ENCODE measurements at regions of chr6 and their contacts with region 1.

Region 1: DNA sequence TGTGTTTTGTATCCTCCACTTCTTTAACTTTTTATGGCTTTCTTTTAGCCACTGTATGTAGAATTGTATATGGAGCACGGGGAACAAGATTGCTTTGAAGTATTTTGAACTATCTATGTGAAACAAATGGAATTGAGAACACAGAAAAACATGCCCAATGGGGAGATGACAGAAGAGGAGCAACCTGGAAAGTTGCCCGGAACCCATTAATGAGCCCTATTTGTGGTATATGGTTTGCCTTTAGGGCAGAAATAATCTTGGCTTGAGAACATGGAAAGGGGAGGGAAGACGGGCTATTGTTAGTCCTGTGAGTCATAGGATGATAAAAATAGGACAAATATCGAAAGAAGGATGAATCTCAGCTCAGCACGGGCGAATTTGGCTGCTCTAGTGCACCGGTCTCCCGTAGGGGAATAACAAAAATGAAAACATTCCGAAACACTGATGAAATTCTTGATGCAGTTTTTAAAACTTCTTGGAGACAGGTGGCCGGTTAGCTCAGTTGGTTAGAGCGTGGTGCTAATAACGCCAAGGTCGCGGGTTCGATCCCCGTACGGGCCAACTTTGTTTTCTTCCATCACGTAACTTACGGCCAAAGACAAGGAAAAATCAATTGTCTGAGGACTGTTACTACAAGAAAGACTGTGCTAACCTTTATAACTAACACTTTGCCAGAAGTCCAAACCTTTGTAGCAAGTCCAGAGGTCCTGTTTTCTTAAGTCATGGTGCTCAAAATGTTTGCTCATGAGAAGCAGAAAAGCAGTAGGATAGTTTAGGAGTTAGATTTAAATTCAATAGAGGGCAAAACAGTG is 15.7 kb downstream of the HMGN4 start:
- DNase-seq: peak; percentile 89
- ATAC-seq: peak; percentile 59
- H3K4me3 Mint-ChIP-seq: no peak overlapping the region
- H3K27ac Mint-ChIP-seq: no peak overlapping the region
- H3K4me1 Mint-ChIP-seq: peaks cover 36% of the 10 kb centered on the region
- H3K27me3 Mint-ChIP-seq: no peaks in the 10 kb centered on the region

Region 2: DNA sequence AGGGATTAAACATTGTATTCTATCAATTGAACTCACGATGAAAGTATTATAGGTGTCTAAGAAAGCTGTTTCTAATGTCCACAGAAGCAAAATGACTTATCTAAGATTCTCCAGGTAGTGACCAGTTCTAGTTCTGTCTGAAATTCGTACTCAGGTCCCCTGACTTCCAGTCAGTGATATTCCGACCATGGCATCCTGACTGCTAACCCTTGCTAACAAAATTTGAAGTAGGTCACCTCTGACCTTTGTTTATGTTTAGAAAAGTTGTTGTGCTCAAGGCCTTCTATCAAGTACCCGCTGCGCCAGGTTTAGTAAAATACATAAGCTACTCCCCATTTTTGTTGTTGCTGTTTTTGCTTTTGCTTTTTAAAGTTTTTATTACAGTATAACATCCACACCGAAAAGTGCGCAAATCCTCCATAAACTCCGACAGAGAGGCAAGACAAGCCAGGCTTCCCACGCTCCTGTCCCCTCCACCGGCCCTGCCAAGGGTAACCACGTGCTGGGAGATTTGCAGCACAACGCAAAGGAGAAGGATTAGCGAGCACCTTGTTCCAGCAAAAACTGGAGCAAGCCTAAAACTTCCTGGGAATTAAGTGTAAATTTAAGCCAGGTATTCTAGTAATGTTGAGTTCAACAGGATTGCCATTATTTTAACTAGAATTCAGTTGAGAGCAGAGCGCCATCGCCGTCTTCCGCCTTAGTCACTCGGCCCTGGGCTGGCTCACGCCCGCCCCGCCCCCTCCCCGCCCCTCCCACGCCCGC is 33.6 kb before region 1 on chr6:
- CTCF ChIA-PET with region 1: no interaction called
- POLR2A ChIA-PET with region 1: no interaction called
- DNase-seq: no peak
- ATAC-seq: peak; percentile 28
- H3K4me3 Mint-ChIP-seq: peak overlapping the region; percentile 75
- H3K27ac Mint-ChIP-seq: peak overlapping the region; percentile 91
- H3K4me1 Mint-ChIP-seq: peaks cover 30% of the 10 kb centered on the region
- H3K27me3 Mint-ChIP-seq: peaks cover 6% of the 10 kb centered on the region

Region 3: GRCh38 chr6:26537846-26538571 is 15.8 kb before region 1 on chr6 and contains the start of gene HMGN4:
- CTCF ChIA-PET with region 1: interaction called, 23 read pairs
- POLR2A ChIA-PET with region 1: interaction called, 20 read pairs
- DNase-seq: peak; percentile 88
- ATAC-seq: peak; percentile 71
- H3K4me3 Mint-ChIP-seq: peak within 1 kb of the TSS; percentile 87
- H3K27ac Mint-ChIP-seq: peak within 1 kb of the TSS; percentile 99
- H3K4me1 Mint-ChIP-seq: peaks cover 58% of the 10 kb centered on the region
- H3K27me3 Mint-ChIP-seq: peaks cover 2% of the 10 kb centered on the region
- total RNA-seq, gene HMGN4: 80.8 to 84.9 TPM

Measured in activated CD8-positive, alpha-beta T cell treated with anti-CD3 and anti-CD28 coated beads, Interleukin-2, amount 10 ng/mL, durations not matched to agents 7 days and 5 days (primary cell).